Naive thymus-derived CD4-positive, alpha-beta T cell (primary cell): ENCODE measurements at regions of chr6 and their contacts with region 1.

Region 1: GRCh38 chr6:134529921-134530320 is 212.0 kb upstream of the SGK1 start:
- DNase-seq: peak in 7 of 9 donors; percentile 52 to 86 (median 76)
- ATAC-seq: peak; percentile 92
- H3K4me3 ChIP-seq: no peak overlapping the region
- H3K4me3 Mint-ChIP-seq: peak overlapping the region in 7 of 10 donors; percentile 11 to 47 (median 22)
- H3K27ac ChIP-seq: no peak overlapping the region
- H3K27ac Mint-ChIP-seq: peak overlapping the region; percentile 36 to 94 (median 77)
- H3K4me1 ChIP-seq: peaks cover 0 to 15% of the 10 kb centered on the region in 2 donors
- H3K4me1 Mint-ChIP-seq: peaks cover 25 to 61% (median 48%) of the 10 kb centered on the region in 7 donors
- H3K27me3 ChIP-seq: no peaks in the 10 kb centered on the region
- H3K27me3 Mint-ChIP-seq: no peaks in the 10 kb centered on the region

Region 2: DNA sequence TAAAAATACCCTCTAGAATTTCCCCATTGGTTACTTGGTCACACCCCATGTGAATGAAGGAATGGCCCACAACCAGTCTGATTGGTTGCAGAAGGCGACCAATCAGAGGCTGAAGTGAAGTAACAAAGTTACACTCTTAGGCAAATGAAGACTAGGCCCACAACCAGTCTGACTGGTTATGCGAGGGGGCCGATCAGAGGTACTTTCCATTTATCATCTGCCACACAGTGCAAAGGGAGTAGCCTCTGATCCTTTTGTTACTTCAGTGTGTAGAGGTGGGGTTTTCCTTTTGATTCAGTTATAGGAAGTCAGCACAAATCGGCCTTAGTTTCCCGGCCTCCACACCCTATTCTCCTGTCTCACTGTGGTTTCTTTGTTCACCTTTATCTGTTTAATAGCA is 150.8 kb before region 1 on chr6:
- CTCF ChIA-PET with region 1: no interaction called
- POLR2A ChIA-PET with region 1: no interaction called
- intact Hi-C with region 1: loop called (anchors 5 to 10 kb)
- DNase-seq: peak in 2 of 9 donors; percentile 38 to 39
- ATAC-seq: peak; percentile 78
- H3K4me3 ChIP-seq: no peak overlapping the region
- H3K4me3 Mint-ChIP-seq: peak overlapping the region in 5 of 10 donors; percentile 31 to 66 (median 43)
- H3K27ac ChIP-seq: no peak overlapping the region
- H3K27ac Mint-ChIP-seq: peak overlapping the region in 7 of 9 donors; percentile 26 to 84 (median 56)
- H3K4me1 ChIP-seq: peaks cover 14 to 17% of the 10 kb centered on the region in 2 donors
- H3K4me1 Mint-ChIP-seq: peaks cover 15 to 42% (median 41%) of the 10 kb centered on the region in 7 donors
- H3K27me3 ChIP-seq: no peaks in the 10 kb centered on the region
- H3K27me3 Mint-ChIP-seq: no peaks in the 10 kb centered on the region

Region 3: GRCh38 chr6:134424165-134424790 is 105.6 kb before region 1 on chr6:
- CTCF ChIA-PET with region 1: no interaction called
- POLR2A ChIA-PET with region 1: no interaction called
- intact Hi-C with region 1: no loop called
- DNase-seq: no peak
- ATAC-seq: no peak
- H3K4me3 ChIP-seq: no peak overlapping the region
- H3K4me3 Mint-ChIP-seq: no peak overlapping the region
- H3K27ac ChIP-seq: no peak overlapping the region
- H3K27ac Mint-ChIP-seq: no peak overlapping the region
- H3K4me1 ChIP-seq: no peaks in the 10 kb centered on the region
- H3K4me1 Mint-ChIP-seq: peaks cover 0 to 23% (median 6%) of the 10 kb centered on the region in 7 donors
- H3K27me3 ChIP-seq: no peaks in the 10 kb centered on the region
- H3K27me3 Mint-ChIP-seq: no peaks in the 10 kb centered on the region

Region 4: DNA sequence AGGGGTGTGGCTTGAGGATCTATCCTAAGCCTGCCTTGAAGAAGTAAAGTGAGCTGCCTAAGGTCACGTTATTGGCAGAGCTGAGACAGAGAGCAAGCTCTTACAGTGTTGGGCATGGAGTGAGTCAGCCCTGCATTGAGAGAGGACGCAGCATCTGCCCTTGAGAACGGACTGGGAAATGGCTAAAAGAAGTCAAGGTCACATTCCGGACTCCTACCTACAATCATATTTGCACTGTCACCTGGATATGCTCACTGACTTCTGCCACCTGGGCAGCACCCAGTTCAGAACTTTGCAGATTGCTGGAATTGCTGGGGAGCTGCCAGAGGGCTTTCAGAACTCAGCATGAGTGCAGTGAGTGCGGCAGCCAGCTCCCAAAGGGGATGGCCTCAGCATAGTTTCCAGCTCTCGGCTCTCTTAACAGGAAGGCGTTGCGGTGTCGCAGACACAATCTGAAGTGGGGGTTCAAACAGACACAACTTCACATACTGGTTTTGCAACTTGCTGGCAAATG is 12.7 kb before region 1 on chr6:
- CTCF ChIA-PET with region 1: interaction called, 3 read pairs
- POLR2A ChIA-PET with region 1: interaction called, 6 read pairs
- intact Hi-C with region 1: loop called (anchors 1 to 2 kb)
- DNase-seq: peak in 1 of 9 donors; percentile 20
- ATAC-seq: no peak
- H3K4me3 ChIP-seq: no peak overlapping the region
- H3K4me3 Mint-ChIP-seq: peak overlapping the region in 2 of 10 donors; percentile 1 to 9
- H3K27ac ChIP-seq: no peak overlapping the region
- H3K27ac Mint-ChIP-seq: peak overlapping the region in 7 of 9 donors; percentile 3 to 95 (median 66)
- H3K4me1 ChIP-seq: peaks cover 0 to 24% of the 10 kb centered on the region in 2 donors
- H3K4me1 Mint-ChIP-seq: peaks cover 12 to 48% (median 34%) of the 10 kb centered on the region in 7 donors
- H3K27me3 ChIP-seq: no peaks in the 10 kb centered on the region
- H3K27me3 Mint-ChIP-seq: no peaks in the 10 kb centered on the region

Region 5: GRCh38 chr6:134564705-134565104 is 34.8 kb after region 1 on chr6:
- CTCF ChIA-PET with region 1: no interaction called
- POLR2A ChIA-PET with region 1: no interaction called
- intact Hi-C with region 1: loop called in 1 of 2 experiments (anchors 5 kb)
- DNase-seq: no peak
- ATAC-seq: no peak
- H3K4me3 ChIP-seq: no peak overlapping the region
- H3K4me3 Mint-ChIP-seq: no peak overlapping the region
- H3K27ac ChIP-seq: no peak overlapping the region
- H3K27ac Mint-ChIP-seq: no peak overlapping the region
- H3K4me1 ChIP-seq: peaks cover 0 to 4% of the 10 kb centered on the region in 2 donors
- H3K4me1 Mint-ChIP-seq: peaks cover 7 to 18% (median 14%) of the 10 kb centered on the region in 7 donors
- H3K27me3 ChIP-seq: no peaks in the 10 kb centered on the region
- H3K27me3 Mint-ChIP-seq: peaks cover 0 to 5% (median 0%) of the 10 kb centered on the region in 5 donors